ENCODE measurements at regions of chr15 and their contacts with region 1.

Region 1: DNA sequence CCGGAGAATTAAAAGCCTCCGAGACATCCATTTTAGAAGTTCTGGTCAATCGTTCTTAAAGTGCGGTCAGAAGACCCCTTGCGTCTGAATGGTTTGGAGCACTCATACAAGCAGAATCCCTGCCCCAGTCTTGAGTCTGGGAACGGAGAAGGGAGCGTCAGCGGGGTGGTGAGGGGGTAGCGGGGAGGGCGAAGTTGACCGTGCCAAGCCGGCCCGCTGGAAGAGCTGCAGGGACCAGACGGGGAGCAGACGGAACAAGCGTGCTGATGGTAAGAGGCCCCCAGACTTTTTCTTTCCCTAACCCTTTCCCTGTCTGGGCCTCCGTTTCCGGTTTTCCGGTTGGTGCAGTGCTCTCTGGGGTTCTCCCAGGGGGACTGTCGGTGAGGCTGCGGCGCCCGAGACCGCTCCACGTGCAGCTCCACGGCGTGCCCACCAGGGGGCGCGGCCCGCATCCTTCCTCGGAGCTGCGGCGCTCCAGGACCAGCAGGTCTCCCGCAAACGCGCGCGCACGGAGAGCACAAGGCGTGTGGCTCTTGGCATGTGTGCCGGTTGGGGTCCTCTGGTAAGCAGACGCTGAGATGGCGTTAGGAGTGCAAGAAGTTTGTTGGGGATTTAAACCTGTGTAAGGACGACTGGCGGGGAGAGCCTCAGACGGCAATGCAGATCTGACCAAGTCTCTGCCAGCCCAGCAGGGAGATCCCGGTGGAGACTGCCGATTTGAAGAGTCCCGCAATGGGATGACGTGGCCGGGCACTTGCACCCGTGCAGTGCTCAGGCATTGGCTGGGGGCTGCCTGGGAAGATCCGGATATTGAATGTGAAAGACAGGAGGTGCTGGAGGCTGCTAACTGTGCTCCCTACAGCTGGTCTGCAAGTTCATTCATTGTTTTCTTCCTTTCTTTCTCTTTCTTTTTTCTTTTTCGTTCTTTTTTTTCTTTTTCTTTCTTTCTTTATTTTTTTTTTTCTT is 19.2 kb upstream of the CORO2B start:
- DNase-seq: peak; percentile 65 to 75
- H3K4me3 ChIP-seq: peak overlapping the region; percentile 42 to 64 (median 43)
- H3K27ac ChIP-seq: no peak overlapping the region
- H3K4me1 ChIP-seq: no peaks in the 10 kb centered on the region
- H3K27me3 ChIP-seq: peaks cover 0 to 10% of the 10 kb centered on the region in 2 donors
- CTCF ChIP-seq: peak; percentile 90 to 92 (median 91)
- POLR2A ChIP-seq: no peak

Region 2: GRCh38 chr15:67839929-67840748 is 719.5 kb before region 1 on chr15 and contains the start of gene RNU6-1:
- intact Hi-C with region 1: loop called (anchors 10 kb)
- DNase-seq: peak; percentile 92 to 94
- H3K4me3 ChIP-seq: peak within 1 kb of the TSS; percentile 81 to 89 (median 86)
- H3K27ac ChIP-seq: peak within 1 kb of the TSS; percentile 92 to 99
- H3K4me1 ChIP-seq: peaks cover 0 to 10% of the 10 kb centered on the region in 2 donors
- H3K27me3 ChIP-seq: peaks cover 2 to 11% of the 10 kb centered on the region in 2 donors
- CTCF ChIP-seq: no peak
- POLR2A ChIP-seq: peak; percentile 85
- total RNA-seq, gene RNU6-1: not detected

Region 3: DNA sequence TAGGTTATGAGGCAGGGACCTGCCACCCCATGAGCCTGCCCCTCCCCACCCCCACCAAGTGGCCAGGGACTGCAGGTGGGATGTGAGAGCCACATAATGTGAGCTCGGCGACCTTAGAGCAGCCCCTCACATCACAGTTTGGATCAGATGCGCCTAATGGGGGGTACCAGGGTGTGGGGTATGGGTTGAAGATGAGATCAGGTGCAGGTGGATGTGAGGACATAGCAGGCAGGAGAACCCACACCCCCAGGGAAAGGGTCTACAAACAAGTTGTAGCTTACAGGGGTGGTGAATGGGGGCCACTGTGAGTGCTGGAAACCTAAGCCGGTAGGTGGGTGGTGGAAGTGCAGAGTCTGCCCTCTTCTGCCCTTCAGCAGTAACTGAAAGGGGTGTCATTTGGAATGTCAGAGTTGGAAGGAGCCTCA is 113.2 kb after region 1 on chr15:
- intact Hi-C with region 1: loop called (anchors 10 kb)
- DNase-seq: no peak
- H3K4me3 ChIP-seq: no peak overlapping the region
- H3K27ac ChIP-seq: no peak overlapping the region
- H3K4me1 ChIP-seq: no peaks in the 10 kb centered on the region
- H3K27me3 ChIP-seq: peaks cover 0 to 3% of the 10 kb centered on the region in 2 donors
- CTCF ChIP-seq: no peak
- POLR2A ChIP-seq: no peak

Region 4: DNA sequence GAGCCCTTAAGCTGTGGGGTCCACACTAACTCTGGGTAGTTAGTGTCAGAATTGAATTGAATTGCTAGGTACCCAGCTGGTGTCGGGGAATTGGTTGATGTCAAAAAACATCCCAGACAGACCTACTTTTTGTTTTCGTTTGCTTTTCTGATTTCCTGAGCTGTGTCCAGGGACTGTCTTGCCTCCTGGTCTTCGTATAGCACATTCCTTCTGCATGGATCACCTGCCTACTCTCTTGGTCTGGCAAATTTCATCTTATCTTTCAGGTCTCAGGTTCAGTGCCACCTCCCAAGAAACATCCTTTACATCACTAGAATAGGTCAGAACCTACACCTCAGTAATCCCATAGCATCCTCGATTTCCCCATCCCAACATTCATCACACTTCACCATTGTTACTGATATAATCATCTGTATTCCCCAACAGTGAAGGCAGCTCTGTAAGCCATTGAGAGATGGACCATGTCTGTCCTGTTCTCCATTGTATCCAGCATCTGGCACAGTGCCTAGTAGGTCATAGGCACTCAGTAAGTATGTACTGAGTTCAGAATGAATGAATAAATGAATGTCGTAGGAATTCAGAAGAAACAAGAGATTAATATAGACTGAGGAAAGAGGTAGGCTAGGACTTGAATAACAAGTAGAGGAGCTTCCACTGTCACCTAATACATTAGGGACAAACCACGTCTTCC is 179.9 kb after region 1 on chr15:
- intact Hi-C with region 1: no loop called
- DNase-seq: no peak
- H3K4me3 ChIP-seq: no peak overlapping the region
- H3K27ac ChIP-seq: no peak overlapping the region
- H3K4me1 ChIP-seq: no peaks in the 10 kb centered on the region
- H3K27me3 ChIP-seq: no peaks in the 10 kb centered on the region
- CTCF ChIP-seq: no peak
- POLR2A ChIP-seq: no peak